ENCODE measurements at regions of chr1 and their contacts with region 1.

Region 1: DNA sequence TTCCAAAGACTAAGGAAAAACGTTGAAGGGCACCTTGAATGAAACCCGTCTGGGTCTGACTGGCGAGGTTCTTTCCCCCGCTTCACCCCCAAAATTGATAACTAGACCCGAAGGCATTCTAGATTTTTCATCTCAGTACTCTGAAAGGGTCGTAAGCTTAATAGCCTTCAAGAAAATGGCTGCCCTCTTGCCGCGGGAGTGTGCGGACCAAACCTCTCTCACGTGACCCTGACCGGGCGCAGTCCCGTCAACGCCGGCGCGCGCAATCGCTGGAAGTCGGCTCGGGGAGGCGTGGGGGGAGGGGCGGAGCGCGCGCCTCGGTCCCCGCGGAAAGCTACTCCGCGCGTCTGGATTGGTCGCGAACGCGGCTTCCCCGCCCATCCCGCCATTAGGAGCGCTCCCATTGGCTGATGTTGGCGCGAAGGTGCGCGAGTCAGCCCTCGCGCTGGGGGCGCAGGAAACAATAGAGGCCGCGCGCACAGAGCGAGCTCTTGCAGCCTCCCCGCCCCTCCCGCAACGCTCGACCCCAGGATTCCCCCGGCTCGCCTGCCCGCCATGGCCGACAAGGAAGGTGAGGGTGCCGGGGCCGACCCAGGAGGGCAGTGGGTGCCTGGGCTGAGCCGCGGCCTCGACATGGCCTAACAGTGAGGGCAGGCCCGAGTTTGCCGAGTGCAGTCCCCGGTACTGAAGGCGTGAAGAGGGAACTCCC is at the start of gene RBBP4:
- DNase-seq: peak; percentile 99
- H3K4me3 ChIP-seq: peak within 1 kb of the TSS; percentile 91
- H3K27ac ChIP-seq: peak within 1 kb of the TSS; percentile 99
- H3K4me1 ChIP-seq: peaks cover 28% of the 10 kb centered on the region
- H3K27me3 ChIP-seq: no peaks in the 10 kb centered on the region
- CTCF ChIP-seq: no peak
- total RNA-seq, gene RBBP4: 496 and 513 TPM in 2 replicates

Region 2: GRCh38 chr1:31497601-31498000 is 1153.3 kb before region 1 on chr1:
- CTCF ChIA-PET with region 1: no interaction called
- POLR2A ChIA-PET with region 1: no interaction called
- intact Hi-C with region 1: no loop called
- DNase-seq: no peak
- H3K4me3 ChIP-seq: no peak overlapping the region
- H3K27ac ChIP-seq: no peak overlapping the region
- H3K4me1 ChIP-seq: no peaks in the 10 kb centered on the region
- H3K27me3 ChIP-seq: no peaks in the 10 kb centered on the region
- CTCF ChIP-seq: no peak

Region 3: GRCh38 chr1:32716312-32717148 is 65.6 kb after region 1 on chr1:
- CTCF ChIA-PET with region 1: no interaction called
- POLR2A ChIA-PET with region 1: no interaction called
- intact Hi-C with region 1: no loop called
- DNase-seq: peak; percentile 58
- H3K4me3 ChIP-seq: no peak overlapping the region
- H3K27ac ChIP-seq: no peak overlapping the region
- H3K4me1 ChIP-seq: peaks cover 6% of the 10 kb centered on the region
- H3K27me3 ChIP-seq: no peaks in the 10 kb centered on the region
- CTCF ChIP-seq: no peak

Region 4: GRCh38 chr1:32753532-32754312 is 102.8 kb after region 1 on chr1:
- CTCF ChIA-PET with region 1: no interaction called
- POLR2A ChIA-PET with region 1: interaction called, 11 read pairs
- intact Hi-C with region 1: no loop called
- DNase-seq: peak; percentile 83
- H3K4me3 ChIP-seq: peak overlapping the region; percentile 59
- H3K27ac ChIP-seq: no peak overlapping the region
- H3K4me1 ChIP-seq: peaks cover 4% of the 10 kb centered on the region
- H3K27me3 ChIP-seq: no peaks in the 10 kb centered on the region
- CTCF ChIP-seq: no peak